ENCODE measurements at regions of chr17 and their contacts with region 1.

Region 1: GRCh38 chr17:6421700-6422604 is 13.0 kb downstream of the AIPL1 start:
- DNase-seq: peak; percentile 51
- H3K4me3 ChIP-seq: no peak overlapping the region
- H3K27ac ChIP-seq: no peak overlapping the region
- H3K4me1 ChIP-seq: no peaks in the 10 kb centered on the region
- H3K27me3 ChIP-seq: no peaks in the 10 kb centered on the region
- CTCF ChIP-seq: peak; percentile 80 to 81
- POLR2A ChIP-seq: no peak

Region 2: DNA sequence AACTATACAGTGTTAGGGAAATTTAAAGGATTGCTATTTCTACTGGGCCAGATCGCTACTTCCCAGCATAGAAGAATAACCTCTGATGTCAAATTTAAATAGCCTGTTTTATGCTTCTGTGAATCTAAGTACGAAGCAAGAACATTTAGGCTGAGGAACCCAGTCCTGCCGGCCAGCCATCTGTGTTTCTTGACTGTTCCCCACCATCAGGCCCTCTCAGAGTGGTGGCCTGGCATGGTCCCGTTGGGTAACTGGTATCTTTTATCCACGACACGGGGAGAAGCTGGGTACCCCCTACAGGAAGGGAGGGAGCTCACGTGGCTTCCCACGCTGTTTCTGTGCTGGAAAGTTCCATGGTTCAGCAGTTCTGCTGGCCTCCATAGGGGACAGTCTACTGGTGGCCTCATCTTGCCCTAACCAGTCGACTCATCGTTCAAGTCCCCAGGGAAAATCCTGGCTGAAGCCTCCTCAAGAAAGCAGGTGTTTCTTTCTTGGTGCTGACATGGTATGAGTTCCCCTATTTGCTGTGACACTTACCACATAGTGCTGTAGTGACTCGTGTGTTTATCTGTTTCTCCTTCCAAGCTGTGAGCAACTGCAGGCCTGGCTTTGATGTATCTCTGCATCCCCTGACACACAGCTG is 636.0 kb before region 1 on chr17:
- CTCF ChIA-PET with region 1: no interaction called
- POLR2A ChIA-PET with region 1: no interaction called
- dilution Hi-C with region 1: no loop called
- intact Hi-C with region 1: loop called (anchors 5 kb)
- DNase-seq: peak; percentile 48
- H3K4me3 ChIP-seq: no peak overlapping the region
- H3K27ac ChIP-seq: peak overlapping the region; percentile 62
- H3K4me1 ChIP-seq: peaks cover 17% of the 10 kb centered on the region
- H3K27me3 ChIP-seq: no peaks in the 10 kb centered on the region
- CTCF ChIP-seq: peak in 1 of 2 donors; percentile 6
- POLR2A ChIP-seq: no peak

Region 3: GRCh38 chr17:6297960-6298359 is 124.0 kb before region 1 on chr17:
- CTCF ChIA-PET with region 1: no interaction called
- POLR2A ChIA-PET with region 1: no interaction called
- dilution Hi-C with region 1: no loop called
- intact Hi-C with region 1: no loop called
- DNase-seq: no peak
- H3K4me3 ChIP-seq: no peak overlapping the region
- H3K27ac ChIP-seq: no peak overlapping the region
- H3K4me1 ChIP-seq: no peaks in the 10 kb centered on the region
- H3K27me3 ChIP-seq: peaks cover 0 to 5% of the 10 kb centered on the region in 2 experiments
- CTCF ChIP-seq: no peak
- POLR2A ChIP-seq: no peak

Region 4: GRCh38 chr17:6443692-6444569 is 22.0 kb after region 1 on chr17 and contains the start of gene PIMREG:
- CTCF ChIA-PET with region 1: no interaction called
- POLR2A ChIA-PET with region 1: no interaction called
- dilution Hi-C with region 1: no loop called
- intact Hi-C with region 1: no loop called
- DNase-seq: peak; percentile 92
- H3K4me3 ChIP-seq: peak within 1 kb of the TSS; percentile 51 to 85 (median 70)
- H3K27ac ChIP-seq: peak within 1 kb of the TSS; percentile 50
- H3K4me1 ChIP-seq: peaks cover 17% of the 10 kb centered on the region
- H3K27me3 ChIP-seq: peaks cover 4 to 13% of the 10 kb centered on the region in 2 experiments
- CTCF ChIP-seq: no peak
- POLR2A ChIP-seq: peak; percentile 28
- total RNA-seq, gene PIMREG: 35.3 and 37.7 TPM in 2 replicates

Region 5: DNA sequence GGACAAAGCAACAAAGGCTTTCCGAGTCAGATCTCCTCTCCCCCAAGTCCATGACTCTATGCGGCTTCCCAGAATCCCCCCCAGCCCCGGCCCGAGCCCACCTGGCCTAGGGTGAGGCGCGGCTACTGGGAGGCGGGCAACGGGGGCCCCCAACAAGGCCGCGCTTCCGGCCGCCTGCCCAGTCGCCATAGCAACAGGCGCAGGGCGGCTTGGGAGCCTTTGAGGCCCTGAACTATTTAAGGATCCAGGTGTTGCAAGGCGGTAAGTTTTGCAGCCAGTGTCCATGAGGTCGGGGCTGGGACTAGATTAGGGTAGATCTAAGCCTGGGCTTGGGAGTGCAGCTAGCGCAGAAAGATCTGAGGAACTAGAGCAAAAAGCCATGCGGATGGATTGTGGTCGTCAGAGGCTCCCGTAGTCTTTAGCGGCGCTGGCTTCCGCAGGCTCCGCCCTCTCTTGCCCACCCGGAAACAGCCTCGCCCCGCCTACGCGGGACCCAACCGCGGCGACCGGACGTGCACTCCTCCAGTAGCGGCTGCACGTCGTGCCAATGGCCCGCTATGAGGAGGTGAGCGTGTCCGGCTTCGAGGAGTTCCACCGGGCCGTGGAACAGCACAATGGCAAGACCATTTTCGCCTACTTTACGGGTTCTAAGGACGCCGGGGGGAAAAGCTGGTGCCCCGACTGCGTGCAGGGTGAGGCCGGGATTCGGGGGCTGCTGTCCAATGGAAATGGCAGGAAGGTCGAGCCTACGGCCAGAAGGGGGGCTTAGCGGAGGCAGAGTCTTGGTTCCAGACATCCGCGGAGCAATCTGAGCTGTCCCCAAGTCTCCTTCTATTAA is 218.8 kb after region 1 on chr17 and contains the starts of genes KIAA0753 and TXNDC17:
- CTCF ChIA-PET with region 1: no interaction called
- POLR2A ChIA-PET with region 1: no interaction called
- dilution Hi-C with region 1: no loop called
- intact Hi-C with region 1: no loop called
- DNase-seq: peak; percentile 96
- H3K4me3 ChIP-seq: peak within 1 kb of the TSS; percentile 44 to 86 (median 70)
- H3K27ac ChIP-seq: peak within 1 kb of the TSS; percentile 83
- H3K4me1 ChIP-seq: peaks cover 15% of the 10 kb centered on the region
- H3K27me3 ChIP-seq: no peaks in the 10 kb centered on the region
- CTCF ChIP-seq: no peak
- POLR2A ChIP-seq: peak; percentile 98
- total RNA-seq, gene KIAA0753: 20.1 and 23.9 TPM in 2 replicates
- total RNA-seq, gene TXNDC17: 101 and 103 TPM in 2 replicates

Measured in endothelial cell of umbilical vein (primary cell).